Activated T-helper 2 cell treated with anti-CD3 and anti-CD28 coated beads, Interferon-gamma antibody, Interleukin-2, Interleukin-4, amounts not matched to agents 10 μg/mL and 5 μg/mL and 100 μg/mL, durations not matched to agents 14 hours and 24 hours and 36 hours (primary cell): ENCODE measurements at regions of chr11 and their contacts with region 1.

Region 1: GRCh38 chr11:17730608-17731462 is 3.7 kb upstream of the KCNC1 start:
- DNase-seq: peak; percentile 51
- H3K4me3 Mint-ChIP-seq: no peak overlapping the region
- H3K27ac Mint-ChIP-seq: no peak overlapping the region
- H3K4me1 Mint-ChIP-seq: no peaks in the 10 kb centered on the region
- H3K27me3 Mint-ChIP-seq: peaks cover 60% of the 10 kb centered on the region

Region 2: GRCh38 chr11:17598700-17599459 is 132.0 kb before region 1 on chr11:
- intact Hi-C with region 1: loop called (anchors 2 kb)
- DNase-seq: peak; percentile 53
- H3K4me3 Mint-ChIP-seq: no peak overlapping the region
- H3K27ac Mint-ChIP-seq: no peak overlapping the region
- H3K4me1 Mint-ChIP-seq: peaks cover 10% of the 10 kb centered on the region
- H3K27me3 Mint-ChIP-seq: no peaks in the 10 kb centered on the region